SK-N-SH (cell line): ENCODE measurements at regions of chr7 and their contacts with region 1.

Region 1: GRCh38 chr7:158353606-158354570 is 233.7 kb downstream of the PTPRN2 start:
- DNase-seq: peak; percentile 82
- H3K4me3 ChIP-seq: no peak overlapping the region
- H3K27ac ChIP-seq: no peak overlapping the region
- H3K4me1 ChIP-seq: peaks cover 0 to 10% of the 10 kb centered on the region in 2 experiments; a peak in 1 of 4 replicates
- H3K27me3 ChIP-seq: no peaks in the 10 kb centered on the region
- CTCF ChIP-seq: peak; percentile 28
- EP300 ChIP-seq: no peak
- RAD21 ChIP-seq: peak; percentile 84

Region 2: GRCh38 chr7:158050978-158051651 is 302.8 kb before region 1 on chr7:
- CTCF ChIA-PET with region 1: interaction called, 11 read pairs
- POLR2A ChIA-PET with region 1: no interaction called
- DNase-seq: no peak
- H3K4me3 ChIP-seq: no peak overlapping the region
- H3K27ac ChIP-seq: peak overlapping the region in 1 of 2 experiments; percentile 12; a peak in 2 of 4 replicates
- H3K4me1 ChIP-seq: peaks cover 0 to 18% of the 10 kb centered on the region in 2 experiments; a peak in 1 of 4 replicates
- H3K27me3 ChIP-seq: no peaks in the 10 kb centered on the region
- CTCF ChIP-seq: no peak
- EP300 ChIP-seq: no peak
- RAD21 ChIP-seq: no peak

Region 3: GRCh38 chr7:158317238-158318205 is 36.4 kb before region 1 on chr7:
- CTCF ChIA-PET with region 1: no interaction called
- POLR2A ChIA-PET with region 1: no interaction called
- DNase-seq: no peak
- H3K4me3 ChIP-seq: no peak overlapping the region
- H3K27ac ChIP-seq: no peak overlapping the region
- H3K4me1 ChIP-seq: no peaks in the 10 kb centered on the region
- H3K27me3 ChIP-seq: no peaks in the 10 kb centered on the region
- CTCF ChIP-seq: no peak
- EP300 ChIP-seq: no peak
- RAD21 ChIP-seq: no peak

Region 4: DNA sequence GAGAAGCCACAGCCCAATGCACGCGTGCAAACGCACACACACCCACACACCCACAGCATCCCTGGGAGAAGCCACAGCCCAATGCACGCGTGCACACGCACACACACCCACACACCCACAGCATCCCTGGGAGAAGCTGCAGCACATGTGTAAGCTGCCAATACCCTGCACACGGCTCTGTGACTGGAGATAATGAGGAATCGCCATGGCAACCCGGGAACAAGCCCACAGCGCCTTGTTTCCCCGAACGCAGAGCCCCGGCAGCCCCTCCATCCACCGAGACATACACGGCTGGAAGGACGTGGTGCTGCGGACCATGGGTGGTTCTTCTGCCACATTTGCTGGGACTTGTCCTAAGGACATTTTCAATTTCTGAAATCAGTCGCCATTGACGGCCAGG is 12.5 kb after region 1 on chr7:
- CTCF ChIA-PET with region 1: interaction called, 16 read pairs
- POLR2A ChIA-PET with region 1: interaction called, 5 read pairs
- DNase-seq: peak; percentile 87
- H3K4me3 ChIP-seq: peak overlapping the region in 1 of 2 experiments; percentile 21; a peak in 1 of 4 replicates
- H3K27ac ChIP-seq: peak overlapping the region in 1 of 2 experiments; percentile 60; a peak in 2 of 4 replicates
- H3K4me1 ChIP-seq: peaks cover 0 to 22% of the 10 kb centered on the region in 2 experiments; a peak in 1 of 4 replicates
- H3K27me3 ChIP-seq: no peaks in the 10 kb centered on the region
- CTCF ChIP-seq: no peak
- EP300 ChIP-seq: no peak
- RAD21 ChIP-seq: no peak